ENCODE measurements at regions of chr9 and their contacts with region 1.

Region 1: GRCh38 chr9:2241836-2242741 is 226.9 kb downstream of the SMARCA2 start:
- DNase-seq: no peak
- H3K4me3 ChIP-seq: peak overlapping the region; percentile 52 to 61 (median 58)
- H3K27ac ChIP-seq: peak overlapping the region; percentile 47 to 79 (median 66)
- H3K4me1 ChIP-seq: peaks cover 7 to 24% (median 20%) of the 10 kb centered on the region in 4 donors
- H3K27me3 ChIP-seq: no peaks in the 10 kb centered on the region
- CTCF ChIP-seq: peak in 2 of 3 experiments; percentile 2 to 9
- EP300 ChIP-seq: no peak
- POLR2A ChIP-seq: peak; percentile 79

Region 2: DNA sequence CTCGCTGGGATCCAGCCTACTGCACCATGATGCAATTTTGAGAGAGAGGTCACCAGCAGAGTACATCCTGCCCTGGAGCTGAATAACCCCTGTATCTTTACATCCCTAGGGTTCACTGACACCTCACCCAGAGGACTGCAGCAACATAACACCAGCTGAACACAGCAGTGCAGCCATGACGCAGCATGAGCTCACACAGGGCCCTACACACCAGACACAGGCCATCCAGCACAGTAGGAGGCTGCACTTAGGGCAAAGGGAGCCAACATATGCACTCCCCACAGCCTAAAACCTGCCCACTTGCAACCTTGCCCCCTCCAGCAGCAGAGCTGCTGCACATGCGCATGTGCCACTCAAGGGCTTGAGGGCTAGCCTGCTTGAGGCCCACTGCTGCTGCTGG is 384.3 kb before region 1 on chr9:
- intact Hi-C with region 1: no loop called
- DNase-seq: no peak
- H3K4me3 ChIP-seq: no peak overlapping the region
- H3K27ac ChIP-seq: no peak overlapping the region
- H3K4me1 ChIP-seq: no peaks in the 10 kb centered on the region
- H3K27me3 ChIP-seq: no peaks in the 10 kb centered on the region
- CTCF ChIP-seq: no peak
- EP300 ChIP-seq: no peak
- POLR2A ChIP-seq: no peak

Region 3: DNA sequence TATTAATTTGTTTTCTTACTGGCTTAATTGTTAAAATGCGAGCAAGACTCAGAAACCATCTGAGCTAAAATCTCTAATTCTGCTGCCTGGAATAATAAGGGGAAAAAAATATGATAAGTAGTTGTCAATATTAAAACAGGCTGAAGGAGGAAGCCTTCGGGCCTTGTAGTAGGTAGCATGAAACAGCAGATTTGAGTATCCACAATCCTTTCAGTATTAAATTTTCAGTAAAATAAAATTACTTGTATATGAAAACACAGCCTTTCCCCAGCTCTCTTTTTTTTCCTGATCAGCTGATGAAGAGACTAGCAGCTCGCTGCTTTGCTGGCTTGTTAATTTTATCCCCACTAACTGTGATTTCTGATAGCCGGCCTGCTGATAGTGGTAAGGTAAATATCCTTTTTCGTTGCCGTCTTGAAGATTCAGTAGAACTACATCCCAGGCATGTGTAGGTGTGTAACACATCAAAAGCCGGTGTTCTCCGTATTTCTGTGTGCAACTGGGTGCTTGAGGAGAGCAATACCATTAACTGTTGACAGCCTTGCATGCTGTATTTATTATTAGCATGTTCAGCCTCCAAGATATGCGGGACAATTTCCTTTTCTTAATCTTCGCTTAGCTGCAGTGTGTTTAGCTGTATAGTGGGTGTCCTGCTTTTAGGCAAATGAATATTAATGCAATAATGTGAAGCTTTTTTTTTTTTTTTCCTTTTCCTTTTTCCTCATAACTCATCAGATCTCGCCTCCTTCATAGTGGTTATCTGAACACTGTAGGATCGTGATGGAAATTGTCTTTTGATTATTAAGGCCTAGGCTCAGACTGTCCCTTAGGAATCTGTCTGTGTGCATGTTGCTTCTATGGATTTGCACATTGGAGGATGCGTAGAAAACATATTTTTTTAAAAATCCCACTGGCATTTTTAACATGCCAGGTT is 82.3 kb before region 1 on chr9:
- intact Hi-C with region 1: loop called (anchors 5 kb)
- DNase-seq: no peak
- H3K4me3 ChIP-seq: peak overlapping the region; percentile 53 to 62 (median 58)
- H3K27ac ChIP-seq: peak overlapping the region; percentile 62 to 82 (median 71)
- H3K4me1 ChIP-seq: peaks cover 4 to 32% (median 21%) of the 10 kb centered on the region in 4 donors
- H3K27me3 ChIP-seq: no peaks in the 10 kb centered on the region
- CTCF ChIP-seq: no peak
- EP300 ChIP-seq: no peak
- POLR2A ChIP-seq: no peak

Region 4: GRCh38 chr9:2181792-2182191 is 60.3 kb before region 1 on chr9:
- intact Hi-C with region 1: no loop called
- DNase-seq: no peak
- H3K4me3 ChIP-seq: no peak overlapping the region
- H3K27ac ChIP-seq: no peak overlapping the region
- H3K4me1 ChIP-seq: peaks cover 0 to 33% (median 18%) of the 10 kb centered on the region in 4 donors
- H3K27me3 ChIP-seq: no peaks in the 10 kb centered on the region
- CTCF ChIP-seq: peak; percentile 36 to 53 (median 40)
- EP300 ChIP-seq: no peak
- POLR2A ChIP-seq: no peak